SK-N-SH (cell line): ENCODE measurements at regions of chr5 and their contacts with region 1.

Region 1: GRCh38 chr5:134041570-134042411 is 37.0 kb upstream of the VDAC1 start:
- DNase-seq: no peak
- H3K4me3 ChIP-seq: no peak overlapping the region
- H3K27ac ChIP-seq: no peak overlapping the region
- H3K4me1 ChIP-seq: peaks cover 0 to 3% of the 10 kb centered on the region in 2 experiments; a peak in 1 of 4 replicates
- H3K27me3 ChIP-seq: no peaks in the 10 kb centered on the region
- CTCF ChIP-seq: no peak
- EP300 ChIP-seq: no peak
- RAD21 ChIP-seq: no peak

Region 2: DNA sequence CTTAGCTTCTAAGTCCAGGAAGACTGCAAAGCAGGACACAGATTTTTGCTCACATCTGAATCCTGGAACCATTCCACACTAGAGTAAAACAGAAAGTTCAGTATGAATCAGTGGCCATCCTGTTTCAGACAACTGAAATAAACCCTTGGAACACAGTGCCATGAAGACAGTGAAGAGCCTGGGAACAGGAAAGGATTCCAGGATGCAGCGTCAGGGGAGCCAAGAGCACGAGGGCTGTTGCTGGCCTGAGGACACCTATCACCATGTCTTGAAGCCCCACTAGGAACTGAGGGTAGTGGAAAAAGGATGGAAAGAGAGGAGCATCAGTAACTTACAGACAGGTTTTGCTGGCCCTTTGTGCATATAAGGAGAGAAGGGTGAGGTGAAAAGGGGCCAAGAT is 314.2 kb before region 1 on chr5:
- CTCF ChIA-PET with region 1: no interaction called
- POLR2A ChIA-PET with region 1: no interaction called
- DNase-seq: no peak
- H3K4me3 ChIP-seq: no peak overlapping the region
- H3K27ac ChIP-seq: no peak overlapping the region
- H3K4me1 ChIP-seq: no peaks in the 10 kb centered on the region; a peak in 1 of 4 replicates
- H3K27me3 ChIP-seq: no peaks in the 10 kb centered on the region
- CTCF ChIP-seq: no peak
- EP300 ChIP-seq: no peak
- RAD21 ChIP-seq: no peak

Region 3: DNA sequence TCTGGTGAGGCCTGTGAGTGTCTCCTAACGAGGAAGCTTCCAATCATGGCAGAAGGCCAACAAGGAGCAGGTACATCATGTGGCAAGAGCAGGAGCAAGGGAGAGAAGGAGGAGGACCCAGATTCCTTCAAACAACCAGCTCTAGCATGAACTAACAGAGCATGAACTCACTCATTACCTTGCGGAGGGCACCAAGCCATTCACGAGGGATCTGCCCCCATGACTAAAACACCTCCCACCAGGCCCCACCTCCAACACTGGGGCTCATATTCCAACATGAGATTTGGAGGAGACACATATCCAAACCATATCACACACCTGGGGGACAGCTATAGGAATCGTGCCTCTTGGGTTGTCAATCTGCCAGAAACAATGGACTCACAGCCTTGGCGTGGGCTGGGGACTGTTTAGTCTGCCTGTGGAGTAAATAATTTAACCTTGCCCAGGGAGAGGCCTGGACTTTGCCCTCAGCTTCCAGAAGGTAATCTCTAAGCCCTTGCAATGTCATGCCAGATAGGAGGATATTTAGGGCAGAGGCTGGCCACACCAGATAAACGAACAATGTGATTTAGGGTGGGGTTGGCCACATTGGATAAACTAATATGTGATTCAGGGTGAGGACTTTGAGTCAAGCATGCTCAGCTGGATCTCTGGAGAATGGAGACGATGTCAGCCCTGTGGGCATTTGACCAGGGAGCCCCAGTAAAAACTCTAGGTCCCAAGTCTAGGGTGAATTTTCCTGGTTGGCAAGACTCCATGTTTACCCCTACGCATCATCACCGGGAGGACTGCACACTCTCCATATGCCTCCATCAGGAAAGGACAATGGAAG is 23.4 kb before region 1 on chr5:
- CTCF ChIA-PET with region 1: interaction called, 33 read pairs
- POLR2A ChIA-PET with region 1: no interaction called
- DNase-seq: no peak
- H3K4me3 ChIP-seq: no peak overlapping the region
- H3K27ac ChIP-seq: no peak overlapping the region
- H3K4me1 ChIP-seq: no peaks in the 10 kb centered on the region
- H3K27me3 ChIP-seq: no peaks in the 10 kb centered on the region
- CTCF ChIP-seq: no peak
- EP300 ChIP-seq: no peak
- RAD21 ChIP-seq: no peak

Region 4: GRCh38 chr5:134070725-134071613 is 29.2 kb after region 1 on chr5:
- CTCF ChIA-PET with region 1: interaction called, 25 read pairs
- POLR2A ChIA-PET with region 1: no interaction called
- DNase-seq: no peak
- H3K4me3 ChIP-seq: no peak overlapping the region
- H3K27ac ChIP-seq: no peak overlapping the region
- H3K4me1 ChIP-seq: peaks cover 0 to 4% of the 10 kb centered on the region in 2 experiments; a peak in 1 of 4 replicates
- H3K27me3 ChIP-seq: no peaks in the 10 kb centered on the region
- CTCF ChIP-seq: no peak
- EP300 ChIP-seq: no peak
- RAD21 ChIP-seq: no peak

Region 5: DNA sequence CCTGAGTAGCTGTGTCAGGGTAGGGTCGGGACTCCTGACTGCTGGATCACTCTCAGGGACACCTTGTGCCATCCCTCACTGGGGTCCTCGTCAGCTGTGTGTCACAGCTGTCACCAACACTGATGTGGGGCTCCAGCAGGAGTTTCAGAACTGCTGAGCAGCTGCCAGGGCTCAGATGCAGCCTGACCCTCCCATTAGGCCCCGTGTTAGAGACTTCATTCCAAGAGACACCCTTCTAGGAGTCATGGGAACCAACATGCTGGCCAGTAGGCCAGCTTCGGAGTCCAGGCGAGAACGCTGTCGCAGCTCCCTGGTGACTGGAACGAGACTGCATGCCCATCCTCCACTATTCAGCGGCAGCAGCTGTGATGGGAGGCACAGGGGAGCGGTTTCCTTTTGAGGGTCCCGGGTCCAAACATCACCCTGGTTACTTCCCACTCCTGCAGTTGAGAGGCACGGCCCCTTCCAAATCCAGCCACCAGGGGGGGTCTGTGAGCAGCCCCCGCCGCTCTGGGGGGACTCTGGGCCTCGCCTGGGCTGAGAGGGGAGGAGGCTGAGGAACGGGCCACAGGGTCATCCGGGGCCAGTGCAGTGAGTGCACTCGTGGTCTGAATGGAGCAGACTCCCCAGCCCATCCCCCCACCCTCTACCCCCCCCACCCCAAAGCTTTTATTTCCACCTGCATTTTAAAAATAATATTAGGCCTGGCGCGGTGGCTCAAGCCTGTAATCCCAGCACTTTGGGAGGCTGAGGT is 60.1 kb after region 1 on chr5:
- CTCF ChIA-PET with region 1: interaction called, 31 read pairs
- POLR2A ChIA-PET with region 1: interaction called, 4 read pairs
- DNase-seq: peak; percentile 85
- H3K4me3 ChIP-seq: no peak overlapping the region; a peak in 1 of 4 replicates
- H3K27ac ChIP-seq: peak overlapping the region in 1 of 2 experiments; percentile 67; a peak in 2 of 4 replicates
- H3K4me1 ChIP-seq: peaks cover 13 to 71% of the 10 kb centered on the region in 2 experiments
- H3K27me3 ChIP-seq: no peaks in the 10 kb centered on the region
- CTCF ChIP-seq: peak; percentile 75
- EP300 ChIP-seq: no peak
- RAD21 ChIP-seq: peak; percentile 63

Region 6: GRCh38 chr5:134145779-134146581 is 104.2 kb after region 1 on chr5:
- CTCF ChIA-PET with region 1: interaction called, 673 read pairs
- POLR2A ChIA-PET with region 1: interaction called, 9 read pairs
- DNase-seq: peak; percentile 77
- H3K4me3 ChIP-seq: no peak overlapping the region; a peak in 1 of 4 replicates
- H3K27ac ChIP-seq: peak overlapping the region in 1 of 2 experiments; percentile 11; a peak in 1 of 4 replicates
- H3K4me1 ChIP-seq: peaks cover 0 to 2% of the 10 kb centered on the region in 2 experiments; a peak in 1 of 4 replicates
- H3K27me3 ChIP-seq: no peaks in the 10 kb centered on the region
- CTCF ChIP-seq: peak; percentile 87
- EP300 ChIP-seq: no peak
- RAD21 ChIP-seq: peak; percentile 76

Region 7: DNA sequence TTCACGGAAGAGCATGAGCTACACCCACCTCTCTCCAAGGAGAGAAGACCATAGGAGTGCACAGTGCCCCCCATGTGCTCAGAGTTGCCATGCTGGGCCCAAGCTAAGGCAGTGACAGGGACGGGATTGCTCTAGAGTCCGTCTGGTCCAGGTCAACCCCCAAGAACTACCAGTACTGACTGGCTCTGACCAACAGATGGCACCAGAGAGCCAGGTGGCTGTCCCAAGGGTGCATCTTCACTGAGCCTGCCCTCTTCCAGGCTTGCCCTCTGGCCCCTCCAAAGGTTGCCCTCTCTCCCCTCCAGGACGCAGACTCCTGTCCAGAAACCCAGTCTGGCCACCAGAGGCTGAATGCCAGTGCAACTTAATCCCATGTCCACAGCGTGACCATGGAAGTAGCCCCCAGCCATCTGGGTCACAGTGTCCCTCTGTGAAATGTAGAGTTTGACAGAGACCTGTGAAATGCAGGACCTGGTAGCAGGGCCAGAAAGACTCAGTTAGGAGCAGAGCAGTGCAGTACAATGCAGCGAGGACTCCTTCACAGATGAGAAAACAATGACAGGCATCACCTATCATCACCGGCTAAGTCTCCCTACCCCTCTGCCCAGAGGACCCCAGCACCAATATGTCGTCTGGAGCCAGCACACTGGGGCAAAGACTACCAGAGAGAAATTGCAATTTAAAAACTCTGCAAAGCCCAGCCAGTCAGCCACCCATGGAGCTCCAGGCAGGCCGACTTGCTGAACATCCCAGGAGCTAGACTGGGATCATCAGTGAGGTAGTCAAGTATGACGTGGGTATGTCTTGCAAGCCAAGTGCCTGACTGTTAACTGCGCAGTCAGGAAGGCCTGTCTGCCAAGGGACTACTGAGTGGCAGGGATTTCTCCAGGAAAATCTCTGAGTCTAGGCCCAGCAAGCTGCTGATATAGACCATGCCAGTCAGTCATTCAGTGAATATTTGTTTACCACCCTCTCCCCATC is 142.7 kb after region 1 on chr5:
- CTCF ChIA-PET with region 1: interaction called, 11 read pairs
- POLR2A ChIA-PET with region 1: no interaction called
- DNase-seq: peak; percentile 81
- H3K4me3 ChIP-seq: no peak overlapping the region
- H3K27ac ChIP-seq: no peak overlapping the region
- H3K4me1 ChIP-seq: no peaks in the 10 kb centered on the region; a peak in 1 of 4 replicates
- H3K27me3 ChIP-seq: no peaks in the 10 kb centered on the region
- CTCF ChIP-seq: peak; percentile 84
- EP300 ChIP-seq: no peak
- RAD21 ChIP-seq: peak; percentile 86